ENCODE measurements at regions of chr9 and their contacts with region 1.

Region 1: DNA sequence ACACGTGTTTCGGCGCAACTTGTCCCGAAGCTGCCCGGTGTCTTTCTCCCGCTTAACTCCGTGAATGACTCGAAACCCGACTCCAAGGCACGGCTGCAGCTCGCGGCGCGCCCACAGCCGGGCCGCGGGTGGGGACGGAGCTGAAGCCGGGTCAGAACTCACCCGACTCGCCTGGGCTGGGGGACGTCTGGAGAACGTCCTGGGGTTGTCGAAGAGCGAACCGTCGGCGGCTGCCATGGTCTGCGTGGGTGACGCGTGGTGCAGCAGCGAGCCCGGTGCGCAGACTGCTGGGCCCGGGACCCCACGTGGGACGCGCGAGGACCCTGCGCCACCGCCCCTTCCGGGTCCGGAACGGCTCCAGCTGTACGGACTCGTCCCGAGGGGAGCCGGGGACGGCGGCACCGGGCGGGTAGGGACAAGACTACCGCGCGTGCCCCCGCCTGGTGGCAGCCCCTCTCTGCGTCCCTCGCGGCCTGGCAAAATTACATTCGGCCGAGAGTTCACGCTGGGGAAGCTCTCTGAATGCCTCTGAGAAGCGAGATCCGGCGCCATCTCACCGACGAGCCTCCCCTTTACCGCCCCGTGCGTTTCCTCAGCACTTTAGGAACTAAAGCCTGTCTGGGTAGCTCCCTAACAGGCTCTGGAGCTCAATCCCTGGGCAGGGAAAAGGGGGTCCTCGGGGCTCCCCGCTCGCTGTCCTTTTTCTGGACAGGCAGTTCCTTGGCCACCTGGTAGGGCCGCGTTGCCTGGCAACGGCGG is at the start of gene DDX31:
- DNase-seq: peak; percentile 95
- H3K4me3 ChIP-seq: peak within 1 kb of the TSS; percentile 87 to 98 (median 96)
- H3K27ac ChIP-seq: peak within 1 kb of the TSS; percentile 91 to 99 (median 94)
- H3K4me1 ChIP-seq: peaks cover 22 to 64% (median 44%) of the 10 kb centered on the region in 4 donors
- H3K27me3 ChIP-seq: no peaks in the 10 kb centered on the region
- CTCF ChIP-seq: no peak
- EP300 ChIP-seq: no peak
- POLR2A ChIP-seq: peak; percentile 5
- total RNA-seq, gene DDX31: 6.6 to 7.8 (median 7.5) TPM

Region 2: GRCh38 chr9:132768932-132769905 is 99.3 kb after region 1 on chr9:
- intact Hi-C with region 1: loop called (anchors 10 kb)
- DNase-seq: no peak
- H3K4me3 ChIP-seq: peak overlapping the region; percentile 62 to 93 (median 86)
- H3K27ac ChIP-seq: peak overlapping the region; percentile 77 to 86 (median 80)
- H3K4me1 ChIP-seq: peaks cover 14 to 23% (median 18%) of the 10 kb centered on the region in 4 donors
- H3K27me3 ChIP-seq: peaks cover 0 to 4% (median 0%) of the 10 kb centered on the region in 4 donors
- CTCF ChIP-seq: peak; percentile 37 to 55 (median 53)
- EP300 ChIP-seq: no peak
- POLR2A ChIP-seq: no peak

Region 3: DNA sequence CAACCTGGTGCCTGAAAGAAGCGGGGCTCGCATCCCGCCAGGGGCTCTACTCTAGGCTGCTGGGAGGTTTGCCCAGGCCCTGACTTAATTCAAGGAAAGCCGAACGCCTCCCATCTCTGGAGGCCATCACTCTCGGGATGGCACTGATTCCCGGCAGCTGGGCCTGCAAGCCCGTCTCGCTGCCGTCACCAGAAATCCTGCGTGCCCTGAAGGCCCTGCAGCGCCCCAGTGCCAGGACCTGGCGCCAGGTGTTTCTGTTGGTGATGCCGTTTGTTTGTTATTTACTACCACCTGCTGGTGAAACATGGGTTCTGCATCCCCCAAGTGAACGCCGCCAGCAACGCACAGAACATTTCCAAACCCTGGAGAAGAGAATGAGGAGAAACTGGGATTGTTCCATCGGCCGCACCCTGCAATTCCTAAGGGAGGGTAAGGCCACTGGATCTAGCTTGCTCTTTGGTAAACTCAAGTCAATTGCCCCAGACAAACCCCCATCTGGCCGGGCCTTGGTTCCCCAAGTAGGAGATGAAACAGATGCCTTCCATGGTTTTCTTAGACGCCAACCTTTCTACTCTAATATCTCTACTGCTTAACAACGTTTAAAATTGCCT is 130.3 kb after region 1 on chr9:
- intact Hi-C with region 1: loop called (anchors 2 kb)
- DNase-seq: no peak
- H3K4me3 ChIP-seq: no peak overlapping the region
- H3K27ac ChIP-seq: no peak overlapping the region
- H3K4me1 ChIP-seq: peaks cover 7 to 13% (median 10%) of the 10 kb centered on the region in 4 donors
- H3K27me3 ChIP-seq: peaks cover 0 to 32% (median 0%) of the 10 kb centered on the region in 4 donors
- CTCF ChIP-seq: peak; percentile 91 to 96 (median 92)
- EP300 ChIP-seq: no peak
- POLR2A ChIP-seq: no peak

Region 4: DNA sequence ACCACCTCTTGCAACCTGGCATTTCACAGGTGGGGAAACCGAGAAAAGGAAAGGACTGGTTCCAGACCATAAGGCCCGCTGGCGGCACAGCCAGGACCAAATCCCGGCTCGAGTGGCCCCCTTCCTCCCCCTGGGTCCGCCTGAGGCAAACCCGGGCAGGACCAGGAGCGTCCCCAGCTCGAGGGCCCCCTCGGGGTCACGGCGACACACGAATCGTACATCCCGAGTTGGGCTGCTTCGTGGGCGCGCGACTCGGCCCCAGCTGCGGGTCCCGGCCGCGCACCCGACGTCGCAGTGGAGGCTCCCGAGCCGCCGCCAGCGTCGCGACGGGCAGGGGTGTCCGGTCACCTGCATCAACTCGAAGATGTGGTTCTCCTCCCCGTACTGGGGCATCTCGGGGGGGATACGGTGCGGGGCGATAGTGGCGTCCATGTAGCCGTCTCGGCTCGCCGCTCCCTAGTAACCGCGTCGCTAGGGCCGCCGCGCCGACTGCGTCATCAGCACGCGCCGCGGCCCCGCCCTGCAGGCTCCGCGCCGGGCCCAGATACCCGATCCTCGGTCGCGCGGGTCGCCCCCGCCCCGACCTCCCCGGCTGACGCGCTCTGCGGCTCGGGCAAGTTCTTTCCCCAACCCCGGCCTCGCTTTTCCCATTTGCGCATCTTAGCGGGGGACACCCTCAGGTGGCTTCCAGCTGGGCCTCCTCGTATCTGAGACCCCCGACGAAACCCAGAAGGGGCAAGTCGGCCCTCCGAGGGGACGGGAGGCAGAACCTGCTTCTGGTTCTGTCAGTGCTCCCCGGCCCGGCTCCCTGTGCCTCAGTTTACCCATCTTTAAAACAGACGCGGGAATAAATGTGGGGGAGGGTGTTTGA is 208.2 kb after region 1 on chr9 and contains the start of gene AK8:
- intact Hi-C with region 1: loop called (anchors 5 kb)
- DNase-seq: no peak
- H3K4me3 ChIP-seq: peak within 1 kb of the TSS; percentile 78 to 93 (median 87)
- H3K27ac ChIP-seq: peak within 1 kb of the TSS; percentile 78 to 90 (median 88)
- H3K4me1 ChIP-seq: peaks cover 11 to 24% (median 16%) of the 10 kb centered on the region in 4 donors
- H3K27me3 ChIP-seq: no peaks in the 10 kb centered on the region
- CTCF ChIP-seq: no peak
- EP300 ChIP-seq: no peak
- POLR2A ChIP-seq: no peak
- total RNA-seq, gene AK8: 0.39 to 1.5 (median 0.90) TPM